Activated B cell treated with CpG ODN at 0.5 μM for 24 hours (primary cell): ENCODE measurements at regions of chr19 and their contacts with region 1.

Region 1: DNA sequence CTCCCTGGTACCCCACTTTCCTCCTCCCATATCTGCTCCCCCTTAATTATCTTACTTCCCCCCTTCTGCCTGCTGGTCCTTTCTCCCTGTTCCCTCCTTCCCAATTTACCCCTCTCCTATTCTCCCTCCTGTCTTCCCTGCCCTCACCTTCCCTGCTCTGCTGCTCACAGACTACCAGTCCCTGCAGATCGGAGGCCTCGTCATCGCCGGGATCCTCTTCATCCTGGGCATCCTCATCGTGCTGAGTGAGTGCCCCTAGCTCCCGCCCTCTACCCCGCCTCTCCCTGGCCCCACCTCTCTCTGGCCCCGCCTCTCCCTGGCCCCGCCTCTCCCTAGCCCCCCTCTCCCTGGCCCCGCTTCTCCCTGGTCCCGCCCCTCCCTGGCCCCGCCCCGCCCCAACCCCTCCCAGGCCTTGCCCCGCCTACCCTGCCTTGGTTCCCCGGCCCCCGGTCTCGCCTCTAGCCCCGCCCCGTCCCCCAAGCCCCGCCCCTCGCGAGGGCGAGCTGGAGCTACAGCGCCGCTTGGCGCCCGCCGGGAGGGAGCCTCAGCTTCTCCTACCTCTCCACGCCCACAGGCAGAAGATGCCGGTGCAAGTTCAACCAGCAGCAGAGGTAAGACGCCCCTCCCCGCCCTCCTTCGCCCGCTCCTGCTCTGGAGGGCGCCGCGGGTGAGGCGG is 2.0 kb upstream of the FXYD7 start:
- DNase-seq: peak; percentile 87
- ATAC-seq: peak; percentile 86
- H3K4me3 Mint-ChIP-seq: peak overlapping the region; percentile 87
- H3K27ac Mint-ChIP-seq: peak overlapping the region; percentile 77
- H3K4me1 Mint-ChIP-seq: peaks cover 40% of the 10 kb centered on the region
- H3K27me3 Mint-ChIP-seq: no peaks in the 10 kb centered on the region
- CTCF ChIP-seq: no peak

Region 2: GRCh38 chr19:35066691-35067563 is 74.2 kb before region 1 on chr19:
- CTCF ChIA-PET with region 1: interaction called, 31 read pairs
- POLR2A ChIA-PET with region 1: interaction called, 4 read pairs
- intact Hi-C with region 1: loop called (anchors 1 kb)
- DNase-seq: peak; percentile 88
- ATAC-seq: peak; percentile 91
- H3K4me3 Mint-ChIP-seq: peak overlapping the region; percentile 24
- H3K27ac Mint-ChIP-seq: peak overlapping the region; percentile 41
- H3K4me1 Mint-ChIP-seq: peaks cover 30% of the 10 kb centered on the region
- H3K27me3 Mint-ChIP-seq: no peaks in the 10 kb centered on the region
- CTCF ChIP-seq: no peak

Region 3: GRCh38 chr19:35124098-35125060 is 16.7 kb before region 1 on chr19:
- CTCF ChIA-PET with region 1: interaction called, 6 read pairs
- POLR2A ChIA-PET with region 1: interaction called, 3 read pairs
- intact Hi-C with region 1: loop called (anchors 1 kb)
- DNase-seq: peak; percentile 83
- ATAC-seq: peak; percentile 98
- H3K4me3 Mint-ChIP-seq: peak overlapping the region; percentile 83
- H3K27ac Mint-ChIP-seq: peak overlapping the region; percentile 67
- H3K4me1 Mint-ChIP-seq: peaks cover 14% of the 10 kb centered on the region
- H3K27me3 Mint-ChIP-seq: no peaks in the 10 kb centered on the region
- CTCF ChIP-seq: no peak

Region 4: GRCh38 chr19:35204799-35205732 is 64.0 kb after region 1 on chr19:
- CTCF ChIA-PET with region 1: interaction called, 6 read pairs
- POLR2A ChIA-PET with region 1: interaction called, 30 read pairs
- intact Hi-C with region 1: no loop called
- DNase-seq: peak; percentile 52
- ATAC-seq: peak; percentile 75
- H3K4me3 Mint-ChIP-seq: peak overlapping the region; percentile 68
- H3K27ac Mint-ChIP-seq: peak overlapping the region; percentile 98
- H3K4me1 Mint-ChIP-seq: peaks cover 78% of the 10 kb centered on the region
- H3K27me3 Mint-ChIP-seq: no peaks in the 10 kb centered on the region
- CTCF ChIP-seq: no peak

Region 5: GRCh38 chr19:35462476-35462953 is 321.4 kb after region 1 on chr19:
- CTCF ChIA-PET with region 1: interaction called, 3 read pairs
- POLR2A ChIA-PET with region 1: no interaction called
- intact Hi-C with region 1: loop called (anchors 5 kb)
- DNase-seq: peak; percentile 35
- ATAC-seq: peak; percentile 76
- H3K4me3 Mint-ChIP-seq: peak overlapping the region; percentile 76
- H3K27ac Mint-ChIP-seq: peak overlapping the region; percentile 85
- H3K4me1 Mint-ChIP-seq: peaks cover 64% of the 10 kb centered on the region
- H3K27me3 Mint-ChIP-seq: no peaks in the 10 kb centered on the region
- CTCF ChIP-seq: no peak